Right ventricle myocardium inferior (tissue), 1 donor: ENCODE measurements at regions of chr7 and their contacts with region 1.

Region 1: DNA sequence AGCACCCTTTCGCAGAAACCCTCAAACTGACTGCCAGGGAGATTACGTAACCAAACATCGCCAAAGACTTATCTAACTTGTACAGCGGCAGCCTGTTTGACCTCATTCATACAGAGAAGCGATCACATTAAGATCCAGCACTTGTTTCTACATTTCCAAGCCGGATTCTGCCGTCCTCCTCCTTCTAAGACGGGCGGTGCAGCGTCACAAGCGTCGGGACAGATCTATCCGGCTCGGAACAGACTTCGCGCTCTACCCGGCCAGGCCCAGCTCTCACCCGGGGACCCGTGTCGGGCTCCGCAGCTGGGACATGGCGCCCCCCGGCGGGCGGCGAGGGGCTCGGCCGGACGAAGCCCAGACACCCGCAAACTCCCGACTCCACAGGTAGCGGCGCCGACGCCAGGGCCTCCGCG is 373 bp downstream of the H2AZ2 start:
- DNase-seq: peak; percentile 91
- ATAC-seq: peak; percentile 80

Region 2: DNA sequence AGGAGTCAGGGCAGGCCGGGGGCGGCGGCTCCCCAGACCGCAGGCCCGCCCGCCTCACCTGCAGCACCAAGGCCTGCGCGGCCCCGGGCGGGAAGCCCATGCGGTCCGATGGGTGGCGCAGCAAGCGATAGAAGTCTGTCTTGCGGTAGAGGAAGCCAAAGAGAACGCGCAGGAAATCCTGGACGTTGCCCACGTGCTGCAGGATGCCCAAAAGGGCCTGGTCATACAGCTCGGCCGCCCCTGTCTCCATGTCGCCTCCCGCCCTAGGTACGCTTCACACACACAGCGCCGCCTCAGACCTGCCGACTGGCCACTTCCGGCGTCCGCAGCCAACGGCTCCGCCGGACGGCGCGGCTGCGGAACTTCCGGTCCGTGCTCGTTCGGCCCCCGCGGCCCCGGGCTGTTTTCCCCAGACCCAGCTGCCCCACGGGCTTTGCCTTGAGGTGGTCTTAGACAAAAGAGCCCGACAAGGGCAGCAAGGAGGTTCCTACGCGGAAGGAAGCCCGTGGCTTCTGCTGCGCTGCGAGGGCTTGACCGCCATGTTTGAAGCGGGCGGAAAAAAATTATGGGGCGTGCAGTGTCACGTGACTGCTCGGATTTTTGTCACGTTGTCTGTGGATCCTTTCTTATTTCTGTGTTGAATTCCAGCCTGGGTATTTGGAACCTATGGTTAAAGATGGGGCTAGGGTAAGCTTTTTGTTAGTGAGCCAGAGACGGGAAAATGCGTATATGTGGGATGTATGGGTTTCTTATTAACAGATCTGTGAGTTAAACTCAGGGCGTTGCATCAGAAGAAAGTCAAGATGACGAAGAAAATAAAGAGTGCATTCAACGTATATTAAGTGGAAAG is 356.9 kb before region 1 on chr7 and contains the start of gene NUDCD3:
- intact Hi-C with region 1: loop called (anchors 10 kb)
- DNase-seq: peak; percentile 93
- ATAC-seq: peak; percentile 96
- total RNA-seq, gene NUDCD3: 112 TPM

Region 3: GRCh38 chr7:44606450-44607254 is 240.9 kb before region 1 on chr7 and contains the start of gene OGDH:
- intact Hi-C with region 1: loop called (anchors 1 kb)
- DNase-seq: peak; percentile 100
- ATAC-seq: peak; percentile 98
- total RNA-seq, gene OGDH: 679 TPM

Region 4: GRCh38 chr7:44748045-44748947 is 99.2 kb before region 1 on chr7 and contains the start of gene ZMIZ2:
- intact Hi-C with region 1: loop called (anchors 5 kb)
- DNase-seq: peak; percentile 98
- ATAC-seq: peak; percentile 98
- total RNA-seq, gene ZMIZ2: 62.2 TPM

Region 5: DNA sequence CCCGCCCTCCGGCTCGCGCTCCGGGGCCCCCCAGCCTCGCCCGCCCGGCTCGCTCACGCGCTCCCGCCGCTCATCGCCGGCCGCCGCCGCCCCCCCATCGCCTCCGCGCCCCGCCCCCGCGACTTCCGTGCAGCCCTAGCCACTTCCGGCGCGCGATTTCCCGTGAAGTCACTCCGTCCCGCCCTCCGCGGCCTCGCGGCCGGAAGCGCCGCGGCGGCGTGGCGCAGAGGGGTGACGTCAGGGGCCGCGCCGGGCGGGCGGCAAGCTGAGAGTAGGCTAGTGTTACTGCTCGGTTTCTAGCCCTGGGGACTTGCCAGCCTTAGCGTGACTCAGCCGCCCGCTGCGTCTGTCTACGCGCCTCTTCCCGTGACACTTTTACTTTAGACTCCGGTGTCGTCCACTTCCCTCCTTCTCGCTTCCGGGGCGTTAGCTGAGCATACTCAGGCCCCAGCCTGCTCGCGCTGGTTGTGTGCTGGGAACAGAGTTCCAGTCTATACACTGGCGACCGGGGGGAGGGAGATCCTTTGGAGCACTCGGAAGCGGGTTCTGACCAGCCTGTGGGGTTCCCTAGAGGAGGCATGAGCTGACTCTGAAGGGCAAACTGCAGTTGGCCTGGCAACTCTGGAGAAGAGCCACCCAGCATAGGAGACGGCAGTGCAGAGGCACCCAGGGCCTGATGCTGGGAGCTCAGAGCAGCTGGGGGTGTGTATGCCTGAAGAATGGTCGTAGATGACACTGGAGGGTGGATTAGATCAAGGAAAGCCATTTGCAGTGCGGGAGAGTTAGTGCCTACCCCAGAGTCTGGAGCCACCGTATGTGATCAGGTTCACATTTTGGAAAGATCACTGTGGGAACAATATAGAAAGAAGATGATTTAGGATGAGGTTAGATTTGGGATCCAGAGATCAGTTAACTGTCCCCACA is 38.1 kb after region 1 on chr7 and contains the start of gene PURB:
- intact Hi-C with region 1: loop called (anchors 1 kb)
- DNase-seq: peak; percentile 98
- ATAC-seq: peak; percentile 98
- total RNA-seq, gene PURB: 13.8 TPM